Activated B cell treated with CpG ODN at 0.5 μM for 24 hours (primary cell): ENCODE measurements at regions of chr11 and their contacts with region 1.

Region 1: GRCh38 chr11:122781378-122782195 is 56.7 kb upstream of the CRTAM start:
- DNase-seq: peak; percentile 64
- ATAC-seq: peak; percentile 95
- H3K4me3 Mint-ChIP-seq: no peak overlapping the region
- H3K27ac Mint-ChIP-seq: no peak overlapping the region
- H3K4me1 Mint-ChIP-seq: no peaks in the 10 kb centered on the region
- H3K27me3 Mint-ChIP-seq: no peaks in the 10 kb centered on the region
- CTCF ChIP-seq: peak; percentile 85

Region 2: GRCh38 chr11:122578168-122578825 is 203.3 kb before region 1 on chr11:
- CTCF ChIA-PET with region 1: interaction called, 32 read pairs
- POLR2A ChIA-PET with region 1: no interaction called
- intact Hi-C with region 1: loop called (anchors 1 kb)
- DNase-seq: no peak
- ATAC-seq: no peak
- H3K4me3 Mint-ChIP-seq: no peak overlapping the region
- H3K27ac Mint-ChIP-seq: no peak overlapping the region
- H3K4me1 Mint-ChIP-seq: peaks cover 10% of the 10 kb centered on the region
- H3K27me3 Mint-ChIP-seq: peaks cover 4% of the 10 kb centered on the region
- CTCF ChIP-seq: no peak

Region 3: GRCh38 chr11:122628810-122629555 is 152.6 kb before region 1 on chr11:
- CTCF ChIA-PET with region 1: interaction called, 131 read pairs
- POLR2A ChIA-PET with region 1: no interaction called
- intact Hi-C with region 1: loop called (anchors 1 kb)
- DNase-seq: peak; percentile 47
- ATAC-seq: peak; percentile 88
- H3K4me3 Mint-ChIP-seq: no peak overlapping the region
- H3K27ac Mint-ChIP-seq: no peak overlapping the region
- H3K4me1 Mint-ChIP-seq: peaks cover 2% of the 10 kb centered on the region
- H3K27me3 Mint-ChIP-seq: peaks cover 15% of the 10 kb centered on the region
- CTCF ChIP-seq: no peak

Region 4: GRCh38 chr11:122796128-122796717 is 14.6 kb after region 1 on chr11:
- CTCF ChIA-PET with region 1: interaction called, 12 read pairs
- POLR2A ChIA-PET with region 1: no interaction called
- intact Hi-C with region 1: no loop called
- DNase-seq: peak; percentile 52
- ATAC-seq: peak; percentile 97
- H3K4me3 Mint-ChIP-seq: no peak overlapping the region
- H3K27ac Mint-ChIP-seq: no peak overlapping the region
- H3K4me1 Mint-ChIP-seq: peaks cover 4% of the 10 kb centered on the region
- H3K27me3 Mint-ChIP-seq: no peaks in the 10 kb centered on the region
- CTCF ChIP-seq: peak; percentile 39